ENCODE measurements at regions of chr3 and their contacts with region 1.

Region 1: GRCh38 chr3:136196401-136197158 is 445 bp upstream of the MSL2 start:
- DNase-seq: peak; percentile 98
- H3K4me3 Mint-ChIP-seq: peak overlapping the region; percentile 82
- H3K27ac Mint-ChIP-seq: peak overlapping the region; percentile 92
- H3K4me1 Mint-ChIP-seq: peaks cover 45% of the 10 kb centered on the region
- H3K27me3 Mint-ChIP-seq: no peaks in the 10 kb centered on the region

Region 2: GRCh38 chr3:134803051-134803505 is 1393.5 kb before region 1 on chr3:
- intact Hi-C with region 1: loop called (anchors 5 kb)
- DNase-seq: peak; percentile 55
- H3K4me3 Mint-ChIP-seq: peak overlapping the region; percentile 46
- H3K27ac Mint-ChIP-seq: peak overlapping the region; percentile 79
- H3K4me1 Mint-ChIP-seq: peaks cover 81% of the 10 kb centered on the region
- H3K27me3 Mint-ChIP-seq: peaks cover 28% of the 10 kb centered on the region

Region 3: DNA sequence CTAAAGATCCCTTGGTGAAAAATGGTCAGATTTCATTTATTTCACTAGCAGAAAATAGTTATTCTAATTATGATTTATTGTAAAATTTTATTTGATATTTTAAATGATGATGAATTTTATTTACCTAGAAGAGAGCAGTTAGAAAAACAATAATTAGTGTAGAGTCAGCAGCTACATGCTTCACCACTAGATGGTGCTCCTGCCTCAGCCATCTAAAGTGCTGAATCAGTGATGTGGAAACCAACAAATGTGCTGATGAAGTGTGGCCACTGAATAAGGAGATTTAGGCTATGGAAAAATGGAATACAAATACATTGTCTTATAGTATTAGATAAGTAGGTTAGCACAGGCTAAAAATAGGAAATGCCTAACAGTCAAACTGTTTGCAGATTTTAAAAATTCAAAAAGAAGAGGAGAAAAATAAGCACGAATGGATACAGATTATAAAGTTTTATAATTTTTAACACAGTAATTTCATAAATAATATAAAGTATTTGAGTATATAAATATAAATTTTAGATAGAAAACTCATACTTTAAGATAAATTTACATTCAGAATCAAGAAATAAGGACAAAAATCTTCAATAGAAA is 121.3 kb before region 1 on chr3:
- intact Hi-C with region 1: loop called (anchors 2 kb)
- DNase-seq: peak; percentile 47
- H3K4me3 Mint-ChIP-seq: no peak overlapping the region
- H3K27ac Mint-ChIP-seq: no peak overlapping the region
- H3K4me1 Mint-ChIP-seq: peaks cover 10% of the 10 kb centered on the region
- H3K27me3 Mint-ChIP-seq: peaks cover 6% of the 10 kb centered on the region

Region 4: GRCh38 chr3:136250226-136250902 is 53.8 kb after region 1 on chr3 and contains the start of gene PCCB:
- intact Hi-C with region 1: loop called (anchors 1 kb)
- DNase-seq: peak; percentile 88
- H3K4me3 Mint-ChIP-seq: peak within 1 kb of the TSS; percentile 89
- H3K27ac Mint-ChIP-seq: peak within 1 kb of the TSS; percentile 91
- H3K4me1 Mint-ChIP-seq: peaks cover 21% of the 10 kb centered on the region
- H3K27me3 Mint-ChIP-seq: no peaks in the 10 kb centered on the region
- total RNA-seq, gene PCCB: 41.4 and 41.7 TPM in 2 replicates

Region 5: DNA sequence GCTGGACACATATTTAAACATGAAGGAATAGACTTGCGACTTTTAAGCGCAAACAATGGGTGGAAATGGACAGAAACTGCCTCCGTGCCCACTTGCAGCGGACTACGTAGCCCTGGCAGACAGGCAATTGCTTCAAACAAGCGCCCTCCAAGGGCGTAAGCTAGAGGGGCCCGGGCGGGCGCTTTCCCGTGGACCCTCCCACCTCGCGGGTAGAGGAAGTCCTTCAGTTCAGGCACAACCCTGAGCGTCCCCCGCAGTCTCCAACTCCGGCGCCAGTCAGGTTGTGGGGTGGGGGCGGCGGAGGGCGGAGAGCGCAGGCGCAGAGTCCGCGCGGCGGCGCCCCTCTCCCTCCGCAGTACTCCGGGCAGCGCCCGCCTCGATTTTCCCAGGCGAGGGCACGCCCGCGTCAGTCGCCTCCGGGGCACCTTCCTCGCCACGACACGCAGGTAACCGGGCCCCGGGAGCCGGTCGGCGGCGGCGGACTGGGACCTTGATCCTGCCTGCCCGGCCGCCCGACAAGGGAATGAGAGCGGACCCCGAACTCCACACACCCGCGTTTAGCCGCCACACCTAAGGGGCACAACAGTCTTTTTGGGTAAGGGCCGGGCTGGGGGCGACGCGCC is 622.3 kb after region 1 on chr3 and contains the start of gene SLC35G2:
- intact Hi-C with region 1: loop called (anchors 2 kb)
- DNase-seq: no peak
- H3K4me3 Mint-ChIP-seq: peak within 1 kb of the TSS; percentile 86
- H3K27ac Mint-ChIP-seq: peak within 1 kb of the TSS; percentile 74
- H3K4me1 Mint-ChIP-seq: peaks cover 27% of the 10 kb centered on the region
- H3K27me3 Mint-ChIP-seq: peaks cover 57% of the 10 kb centered on the region
- total RNA-seq, gene SLC35G2: 2.6 and 3.0 TPM in 2 replicates

Region 6: GRCh38 chr3:137013955-137014688 is 817.5 kb after region 1 on chr3:
- intact Hi-C with region 1: loop called (anchors 5 kb)
- DNase-seq: peak; percentile 72
- H3K4me3 Mint-ChIP-seq: peak overlapping the region; percentile 78
- H3K27ac Mint-ChIP-seq: no peak overlapping the region
- H3K4me1 Mint-ChIP-seq: peaks cover 10% of the 10 kb centered on the region
- H3K27me3 Mint-ChIP-seq: no peaks in the 10 kb centered on the region